ENCODE measurements at regions of chr13 and their contacts with region 1.

Region 1: DNA sequence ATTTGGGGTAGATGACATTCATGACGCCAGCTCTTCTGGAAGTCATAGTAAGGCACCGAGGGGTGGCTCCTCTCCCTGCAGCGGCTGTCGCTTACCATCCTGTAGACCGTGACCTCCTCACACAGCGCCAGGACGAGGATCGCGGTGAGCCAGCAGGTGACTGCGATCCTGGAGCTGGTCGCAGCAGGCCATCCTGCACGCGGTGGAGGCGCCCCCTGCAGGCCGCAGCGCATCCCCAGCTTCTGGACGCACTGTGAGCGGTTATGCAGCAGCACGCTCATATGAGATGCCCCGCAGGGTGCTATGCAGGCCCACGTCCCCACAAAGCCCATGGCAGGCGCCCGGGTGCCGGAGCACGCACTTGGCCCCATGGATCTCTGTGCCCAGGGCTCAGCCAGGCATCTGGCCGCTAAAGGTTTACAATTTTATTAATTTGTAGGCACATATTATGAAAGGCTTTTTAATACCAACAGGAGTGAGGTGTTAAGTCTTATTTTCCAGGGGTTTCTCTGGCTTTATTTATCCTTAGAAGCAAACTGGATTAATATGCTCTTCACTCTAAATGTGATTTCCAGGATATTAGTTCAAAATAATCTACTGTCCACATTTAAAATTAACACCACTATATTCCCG is 35.6 kb upstream of the PSPC1 start:
- DNase-seq: no peak
- H3K4me3 ChIP-seq: no peak overlapping the region
- H3K27ac ChIP-seq: no peak overlapping the region
- H3K4me1 ChIP-seq: no peaks in the 10 kb centered on the region
- H3K27me3 ChIP-seq: no peaks in the 10 kb centered on the region
- CTCF ChIP-seq: peak; percentile 52; the same call in 1 of the 2 replicates

Region 2: DNA sequence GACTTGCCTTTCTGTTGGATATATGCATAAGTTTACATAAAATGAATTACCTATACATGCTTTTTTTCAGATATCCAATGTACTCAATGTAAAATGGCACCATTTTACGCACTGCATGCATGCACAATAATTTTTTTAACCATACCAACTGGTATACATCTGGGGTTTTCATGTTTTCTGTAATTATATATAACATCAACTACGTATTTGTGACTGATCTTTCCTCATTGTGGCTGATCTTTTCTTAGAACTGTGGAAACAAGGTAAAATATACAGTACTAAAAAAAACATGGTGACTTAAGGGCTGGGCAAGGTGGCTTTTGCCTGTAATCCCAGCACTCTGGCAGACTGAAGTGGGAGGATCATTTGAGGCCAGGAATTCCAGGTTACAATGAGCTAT is 54.1 kb before region 1 on chr13:
- CTCF ChIA-PET with region 1: no interaction called
- POLR2A ChIA-PET with region 1: interaction called, 35 read pairs
- intact Hi-C with region 1: no loop called
- DNase-seq: no peak
- H3K4me3 ChIP-seq: no peak overlapping the region
- H3K27ac ChIP-seq: no peak overlapping the region
- H3K4me1 ChIP-seq: no peaks in the 10 kb centered on the region
- H3K27me3 ChIP-seq: no peaks in the 10 kb centered on the region
- CTCF ChIP-seq: no peak